ENCODE measurements at regions of chr7 and their contacts with region 1.

Region 1: DNA sequence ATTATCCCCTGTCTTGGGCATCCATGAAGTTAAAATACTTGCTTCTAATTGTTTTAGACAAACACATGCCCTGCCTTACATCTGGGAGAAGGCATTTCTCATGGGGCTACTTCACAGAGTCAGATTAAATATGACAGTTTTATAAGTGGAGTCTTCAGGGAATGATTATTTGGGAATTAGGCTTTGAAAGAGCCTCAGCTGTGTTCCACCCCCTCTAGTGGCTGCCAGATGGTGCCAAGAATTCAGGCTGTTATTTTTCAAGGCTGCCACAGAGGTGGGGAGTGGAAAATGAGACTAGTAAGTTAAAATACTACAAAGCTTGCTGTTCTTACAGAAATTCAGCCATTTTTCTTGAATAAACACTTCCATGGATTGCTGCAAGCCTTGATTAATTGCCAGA is 45.8 kb upstream of the DNAH11 start:
- DNase-seq: no peak

Region 2: GRCh38 chr7:23242321-23242720 is 1745.2 kb after region 1 on chr7:
- intact Hi-C with region 1: loop called in 1 of 2 experiments (anchors 5 kb)
- DNase-seq: no peak